Activated T-helper 1 cell treated with anti-CD3 and anti-CD28 coated beads, Interleukin-12 subunit alpha, Interleukin-12 subunit beta, Interleukin-2, Interleukin-4 antibody, amounts not matched to agents 30 ng/mL and 10 ng/mL and 1 ng/mL, durations not matched to agents 14 hours and 24 hours and 36 hours (primary cell): ENCODE measurements at regions of chr13 and their contacts with region 1.

Region 1: DNA sequence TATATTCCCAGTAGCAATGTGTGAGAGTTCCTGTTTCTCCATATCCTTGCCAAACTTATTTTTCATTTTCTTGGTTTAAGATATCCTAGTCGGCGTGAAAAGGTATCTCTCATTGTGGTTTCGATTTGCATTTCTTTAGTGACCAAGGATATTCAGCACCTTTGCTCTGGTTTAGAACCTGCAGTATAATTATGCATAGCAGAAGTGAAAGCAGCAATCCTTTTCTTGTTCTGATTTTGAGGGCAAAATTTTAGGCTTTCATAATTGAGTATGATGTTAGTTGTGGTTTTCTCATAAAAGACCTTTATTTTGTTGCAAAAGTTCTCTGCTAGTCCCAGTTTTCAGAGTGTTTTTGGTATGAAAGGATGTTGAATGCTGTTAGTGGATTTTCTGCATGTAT is 491.0 kb downstream of the FGF9 start:
- DNase-seq: no peak
- H3K4me3 Mint-ChIP-seq: no peak overlapping the region
- H3K27ac Mint-ChIP-seq: no peak overlapping the region
- H3K4me1 Mint-ChIP-seq: peaks cover 19% of the 10 kb centered on the region
- H3K27me3 Mint-ChIP-seq: peaks cover 1% of the 10 kb centered on the region

Region 2: DNA sequence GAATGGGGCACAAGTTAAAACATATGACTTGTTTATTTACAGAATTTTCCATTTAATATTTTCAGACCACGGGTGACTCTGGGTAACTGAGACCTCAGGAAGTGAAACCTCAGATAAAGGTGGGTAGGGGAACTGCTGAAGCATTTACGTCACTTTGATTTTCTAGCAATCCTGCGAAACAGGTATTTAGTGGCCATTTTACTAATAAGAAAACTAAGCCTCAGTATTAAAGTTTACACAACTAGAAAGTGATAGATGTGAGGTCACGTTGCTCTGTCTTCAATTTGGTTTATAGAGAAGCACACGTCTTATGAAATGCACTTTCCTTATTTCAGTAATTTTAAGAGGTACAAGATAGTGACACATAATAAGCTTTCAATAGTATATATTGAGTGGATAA is 88.2 kb before region 1 on chr13:
- intact Hi-C with region 1: loop called (anchors 2 kb)
- DNase-seq: no peak
- H3K4me3 Mint-ChIP-seq: no peak overlapping the region
- H3K27ac Mint-ChIP-seq: peak overlapping the region; percentile 79
- H3K4me1 Mint-ChIP-seq: peaks cover 54% of the 10 kb centered on the region
- H3K27me3 Mint-ChIP-seq: no peaks in the 10 kb centered on the region